Right lobe of liver (tissue), 6 donors: ENCODE measurements at regions of chr1 and their contacts with region 1.

Region 1: DNA sequence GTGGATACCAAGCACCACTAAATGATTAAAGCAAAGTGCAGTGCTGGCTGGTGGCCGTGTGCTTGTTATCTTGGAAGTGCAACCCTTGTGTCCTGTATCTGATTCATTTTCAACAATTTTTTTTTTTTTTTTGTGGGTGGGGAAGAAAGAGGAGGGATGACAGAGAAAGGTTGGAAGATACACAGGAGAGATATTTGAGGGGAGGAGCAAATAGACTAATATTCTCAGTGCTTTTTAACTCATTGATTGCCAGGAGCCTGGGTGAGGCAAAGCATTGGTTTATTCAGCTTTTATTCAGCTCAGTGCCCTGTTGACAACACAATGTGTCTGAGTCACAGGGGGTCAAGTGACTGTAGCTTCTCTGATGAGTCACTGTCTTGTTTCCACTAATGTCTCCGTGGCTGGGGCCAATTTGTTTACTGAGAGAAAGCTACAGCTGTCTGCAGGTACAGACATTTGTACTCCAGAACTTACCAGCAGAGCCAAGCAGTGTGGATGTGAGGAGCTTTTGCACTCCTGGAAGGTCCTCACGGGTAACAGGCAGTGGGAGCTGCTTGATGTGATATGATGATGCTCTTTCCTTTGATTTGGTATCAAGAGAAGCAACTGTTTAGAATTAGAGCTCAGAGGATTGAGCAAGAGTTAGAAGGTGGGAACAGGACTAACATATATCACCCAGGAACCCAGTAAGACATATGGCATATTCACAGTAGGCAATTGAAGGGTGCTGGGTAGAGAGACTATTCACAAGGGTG is 23.6 kb upstream of the DNM3 start:
- DNase-seq: no peak
- ATAC-seq: peak in 2 of 4 donors; percentile 39 to 77
- H3K4me3 ChIP-seq: no peak overlapping the region
- H3K27ac ChIP-seq: no peak overlapping the region
- H3K4me1 ChIP-seq: no peaks in the 10 kb centered on the region
- H3K27me3 ChIP-seq: no peaks in the 10 kb centered on the region
- CTCF ChIP-seq: no peak
- POLR2A ChIP-seq: no peak

Region 2: DNA sequence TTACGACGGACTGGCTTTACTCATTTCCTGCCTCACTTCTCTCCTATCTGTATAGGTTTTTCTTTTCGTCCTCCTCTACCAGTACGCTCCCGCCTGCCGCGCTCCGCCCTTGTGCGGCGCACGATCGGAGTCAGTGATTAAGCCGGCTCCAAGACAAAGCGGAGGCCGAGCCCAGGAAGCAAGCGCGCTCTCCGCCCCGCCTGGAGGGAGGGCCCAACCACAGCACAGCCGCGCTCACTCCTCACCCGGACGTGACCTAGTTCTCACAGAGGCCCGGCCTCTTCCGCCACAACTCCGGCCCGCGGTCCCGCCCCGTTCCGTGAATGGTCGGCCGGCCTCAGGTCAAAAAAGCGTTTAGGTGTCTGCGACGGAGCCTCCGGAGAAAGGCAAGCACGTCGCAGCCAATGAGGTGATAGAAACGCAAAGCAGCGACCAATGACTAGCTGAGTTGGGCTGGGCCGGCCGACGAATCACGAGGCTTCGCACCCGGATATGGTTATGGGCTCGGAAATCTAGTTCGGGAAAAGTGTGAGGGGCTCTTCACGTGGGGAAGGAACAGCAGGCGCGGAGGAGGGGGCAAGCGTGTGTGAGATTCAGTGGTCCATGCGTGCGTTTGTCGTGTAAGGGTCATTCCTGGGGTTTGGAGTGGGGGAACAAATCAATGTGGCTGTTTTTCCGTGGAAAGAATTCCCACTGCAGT is 36.4 kb before region 1 on chr1 and contains the start of gene METTL13:
- intact Hi-C with region 1: no loop called
- DNase-seq: peak; percentile 99
- ATAC-seq: peak; percentile 99 to 100 (median 99)
- H3K4me3 ChIP-seq: peak within 1 kb of the TSS; percentile 59 to 84 (median 84)
- H3K27ac ChIP-seq: peak within 1 kb of the TSS; percentile 57 to 79 (median 63)
- H3K4me1 ChIP-seq: peaks cover 0 to 10% (median 5%) of the 10 kb centered on the region in 4 donors
- H3K27me3 ChIP-seq: no peaks in the 10 kb centered on the region
- CTCF ChIP-seq: no peak
- POLR2A ChIP-seq: peak; percentile 97
- total RNA-seq, gene METTL13: 8.9 to 14.4 (median 11.9) TPM

Region 3: GRCh38 chr1:171954361-171954760 is 136.7 kb after region 1 on chr1:
- intact Hi-C with region 1: loop called in 1 of 2 experiments (anchors 10 kb)
- DNase-seq: no peak
- ATAC-seq: no peak
- H3K4me3 ChIP-seq: no peak overlapping the region
- H3K27ac ChIP-seq: no peak overlapping the region
- H3K4me1 ChIP-seq: no peaks in the 10 kb centered on the region
- H3K27me3 ChIP-seq: no peaks in the 10 kb centered on the region
- CTCF ChIP-seq: no peak
- POLR2A ChIP-seq: no peak